Psoas muscle (tissue), 8 donors: ENCODE measurements at regions of chr2 and their contacts with region 1.

Region 1: GRCh38 chr2:64404002-64404731 is 49.8 kb upstream of the LGALSL start:
- DNase-seq: peak; percentile 86 to 92
- ATAC-seq: peak; percentile 67 to 84 (median 71)
- H3K4me3 ChIP-seq: peak overlapping the region; percentile 39
- H3K27ac ChIP-seq: peak overlapping the region; percentile 85
- H3K4me1 ChIP-seq: peaks cover 57% of the 10 kb centered on the region
- H3K27me3 ChIP-seq: no peaks in the 10 kb centered on the region
- CTCF ChIP-seq: no peak

Region 2: GRCh38 chr2:64214281-64215115 is 189.7 kb before region 1 on chr2:
- intact Hi-C with region 1: no loop called
- DNase-seq: no peak
- ATAC-seq: peak in 2 of 4 donors; percentile 58 to 61
- H3K4me3 ChIP-seq: no peak overlapping the region
- H3K27ac ChIP-seq: no peak overlapping the region
- H3K4me1 ChIP-seq: peaks cover 19% of the 10 kb centered on the region
- H3K27me3 ChIP-seq: no peaks in the 10 kb centered on the region
- CTCF ChIP-seq: no peak

Region 3: GRCh38 chr2:64359892-64360657 is 44.1 kb before region 1 on chr2:
- intact Hi-C with region 1: loop called in 1 of 2 experiments (anchors 5 kb)
- DNase-seq: peak; percentile 83 to 86
- ATAC-seq: peak; percentile 90 to 98 (median 95)
- H3K4me3 ChIP-seq: no peak overlapping the region
- H3K27ac ChIP-seq: no peak overlapping the region
- H3K4me1 ChIP-seq: peaks cover 7% of the 10 kb centered on the region
- H3K27me3 ChIP-seq: no peaks in the 10 kb centered on the region
- CTCF ChIP-seq: no peak

Region 4: DNA sequence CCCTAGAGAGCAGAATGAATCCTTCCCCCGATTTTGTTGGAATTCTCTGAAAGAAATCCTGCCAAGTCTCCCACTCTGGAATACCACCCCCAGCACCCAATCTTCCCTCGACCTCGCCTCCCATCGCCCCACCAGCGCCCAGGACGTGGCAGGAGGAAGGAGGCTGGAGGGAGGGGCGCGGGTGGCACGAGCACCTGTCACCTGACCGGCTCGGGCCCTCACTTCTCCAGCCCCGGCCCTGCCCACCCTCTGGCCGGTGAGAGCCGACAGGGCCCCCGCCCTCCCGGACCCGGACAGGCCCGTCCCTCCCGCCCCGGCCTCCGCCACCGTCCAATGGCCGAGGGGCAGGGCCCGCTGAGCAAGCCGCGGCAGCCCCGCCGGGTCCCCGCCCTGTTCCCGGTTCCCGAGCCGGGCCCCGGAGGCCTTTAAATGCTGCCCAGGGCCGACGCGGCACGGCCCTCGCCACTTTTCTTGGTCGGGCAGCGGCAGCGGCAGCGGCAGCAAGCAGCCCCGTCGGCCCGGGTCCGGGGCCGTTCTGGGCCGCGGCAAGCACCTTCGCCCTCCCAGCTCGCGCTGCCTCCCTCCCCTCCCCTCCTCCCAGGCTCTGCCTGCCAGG is 49.7 kb after region 1 on chr2 and contains the start of gene LGALSL:
- intact Hi-C with region 1: loop called in 1 of 2 experiments (anchors 2 kb)
- DNase-seq: peak; percentile 80 to 81
- ATAC-seq: peak; percentile 78 to 86 (median 83)
- H3K4me3 ChIP-seq: peak within 1 kb of the TSS; percentile 91
- H3K27ac ChIP-seq: peak within 1 kb of the TSS; percentile 94
- H3K4me1 ChIP-seq: peaks cover 54% of the 10 kb centered on the region
- H3K27me3 ChIP-seq: no peaks in the 10 kb centered on the region
- CTCF ChIP-seq: no peak
- total RNA-seq, gene LGALSL: 11.4 to 30.9 (median 23.2) TPM

Region 5: DNA sequence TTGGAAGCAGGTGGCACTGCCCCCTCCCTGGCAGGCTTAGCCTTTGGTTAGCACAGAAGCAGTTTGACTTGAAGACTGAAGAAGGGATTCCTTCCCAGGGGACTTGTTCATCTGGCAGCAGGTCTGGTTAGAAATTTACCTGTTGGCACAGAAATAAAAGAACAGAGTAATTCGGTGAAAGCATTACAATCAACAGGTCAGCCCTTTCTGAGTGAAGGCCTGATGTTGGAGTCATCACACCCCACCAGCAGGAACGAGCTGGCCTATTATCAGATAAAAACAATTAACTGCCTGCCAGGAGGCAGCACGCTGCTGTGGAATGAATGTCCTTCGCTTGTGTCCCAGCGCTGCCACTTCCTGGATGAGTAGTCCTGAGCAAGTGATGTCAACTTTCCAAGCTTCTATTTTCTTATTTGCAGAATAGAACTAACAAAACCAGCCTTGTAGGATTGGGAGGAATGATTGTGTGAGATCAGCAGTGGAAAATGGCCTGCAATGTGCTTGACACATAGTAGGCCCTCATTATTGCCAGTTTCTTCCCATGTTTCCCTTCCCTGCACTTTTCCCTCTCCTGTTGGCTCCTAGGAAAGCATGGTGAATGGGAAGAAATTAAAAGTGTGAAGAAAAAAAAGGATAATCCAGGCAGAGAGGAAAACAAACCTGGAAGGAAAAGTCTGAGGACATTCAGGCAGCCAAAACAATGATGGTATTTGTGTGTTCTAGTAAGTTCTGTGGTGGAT is 78.8 kb after region 1 on chr2:
- intact Hi-C with region 1: no loop called
- DNase-seq: no peak
- ATAC-seq: no peak
- H3K4me3 ChIP-seq: no peak overlapping the region
- H3K27ac ChIP-seq: no peak overlapping the region
- H3K4me1 ChIP-seq: no peaks in the 10 kb centered on the region
- H3K27me3 ChIP-seq: no peaks in the 10 kb centered on the region
- CTCF ChIP-seq: no peak